ENCODE measurements at regions of chr1 and their contacts with region 1.

Region 1: DNA sequence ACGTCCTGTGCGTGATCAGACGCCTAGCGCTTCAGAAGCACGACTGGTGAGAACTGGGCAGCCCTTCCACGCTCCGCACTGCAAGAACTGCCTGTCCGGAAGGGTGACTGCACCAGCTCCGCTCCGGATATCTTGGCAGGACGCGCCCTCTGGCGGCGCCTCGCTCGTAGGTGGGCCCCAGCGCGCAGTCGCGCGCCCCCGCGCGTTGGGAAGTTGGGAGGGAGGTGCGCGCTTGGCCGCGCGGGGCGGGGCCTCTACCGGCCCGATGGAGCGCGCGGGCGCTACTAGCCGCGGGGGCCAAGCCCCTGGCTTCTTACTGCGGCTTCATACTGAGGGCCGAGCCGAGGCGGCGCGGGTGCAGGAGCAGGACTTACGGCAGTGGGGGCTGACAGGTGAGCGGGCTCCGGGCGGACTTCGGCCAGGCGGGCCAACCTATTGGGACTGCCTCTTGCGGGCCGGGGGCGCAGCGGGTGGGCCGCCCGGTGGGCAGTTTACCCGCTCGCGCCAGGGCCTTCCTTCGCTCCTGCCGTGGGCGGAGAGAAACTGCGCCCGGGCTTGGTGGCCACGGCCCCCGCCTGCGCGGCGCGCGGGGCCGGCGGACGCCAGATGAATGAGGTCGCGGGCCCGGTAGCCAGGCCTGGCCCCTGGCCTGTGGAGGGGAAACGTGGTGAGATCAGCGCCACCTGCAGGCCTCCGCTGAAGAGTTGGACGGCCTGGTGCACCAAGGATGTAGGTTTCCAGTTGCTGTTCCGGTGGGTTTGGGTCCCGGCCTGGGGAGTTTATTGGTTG is at the start of gene CHD1L:
- DNase-seq: peak; percentile 95
- H3K4me3 ChIP-seq: peak within 1 kb of the TSS; percentile 100
- H3K27ac ChIP-seq: peak within 1 kb of the TSS; percentile 95
- H3K4me1 ChIP-seq: no peaks in the 10 kb centered on the region
- H3K27me3 ChIP-seq: no peaks in the 10 kb centered on the region
- CTCF ChIP-seq: peak; percentile 74
- total RNA-seq, gene CHD1L: 34.7 to 40.7 TPM

Region 2: DNA sequence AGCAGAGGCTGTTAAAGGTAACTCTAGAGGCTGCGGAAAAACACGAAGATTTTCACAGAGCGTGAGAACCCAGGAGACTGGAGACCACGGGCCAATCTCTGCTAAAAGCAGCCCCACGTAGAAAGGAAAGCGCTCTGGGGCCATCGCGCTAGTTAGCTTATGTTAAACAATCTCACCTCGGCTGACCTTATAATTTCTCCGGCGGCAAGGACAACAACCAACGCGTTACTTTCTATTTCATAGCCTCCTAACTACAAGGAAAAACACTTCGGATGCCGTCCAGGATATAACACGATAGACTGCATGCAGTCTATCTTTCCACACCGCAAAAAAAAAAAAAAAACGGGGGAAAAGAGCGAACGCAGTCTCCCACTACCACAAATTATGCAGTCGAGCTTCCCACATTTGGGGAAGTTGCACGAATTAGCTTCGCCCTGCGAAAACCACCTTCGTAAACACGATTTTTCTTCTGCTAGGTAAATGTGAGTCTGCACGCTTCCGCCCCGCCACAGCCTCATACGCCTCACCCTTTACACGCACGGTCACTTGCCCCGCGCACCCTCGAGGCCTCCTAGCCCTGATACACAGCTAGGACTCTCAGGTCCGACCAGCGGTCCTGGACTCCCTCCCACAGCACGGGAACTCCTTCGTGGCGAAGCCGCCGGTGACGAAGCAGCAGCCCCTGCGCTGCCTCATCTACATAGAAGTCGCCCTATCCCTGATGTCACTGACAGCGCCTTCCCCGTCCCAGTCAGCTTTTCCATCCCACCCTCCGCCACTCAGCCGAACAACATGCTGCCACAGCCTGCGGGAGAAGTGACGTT is 158.1 kb before region 1 on chr1:
- intact Hi-C with region 1: loop called (anchors 10 kb)
- DNase-seq: peak; percentile 72
- H3K4me3 ChIP-seq: peak overlapping the region; percentile 41
- H3K27ac ChIP-seq: peak overlapping the region; percentile 40
- H3K4me1 ChIP-seq: peaks cover 9% of the 10 kb centered on the region
- H3K27me3 ChIP-seq: peaks cover 37% of the 10 kb centered on the region
- CTCF ChIP-seq: no peak

Region 3: DNA sequence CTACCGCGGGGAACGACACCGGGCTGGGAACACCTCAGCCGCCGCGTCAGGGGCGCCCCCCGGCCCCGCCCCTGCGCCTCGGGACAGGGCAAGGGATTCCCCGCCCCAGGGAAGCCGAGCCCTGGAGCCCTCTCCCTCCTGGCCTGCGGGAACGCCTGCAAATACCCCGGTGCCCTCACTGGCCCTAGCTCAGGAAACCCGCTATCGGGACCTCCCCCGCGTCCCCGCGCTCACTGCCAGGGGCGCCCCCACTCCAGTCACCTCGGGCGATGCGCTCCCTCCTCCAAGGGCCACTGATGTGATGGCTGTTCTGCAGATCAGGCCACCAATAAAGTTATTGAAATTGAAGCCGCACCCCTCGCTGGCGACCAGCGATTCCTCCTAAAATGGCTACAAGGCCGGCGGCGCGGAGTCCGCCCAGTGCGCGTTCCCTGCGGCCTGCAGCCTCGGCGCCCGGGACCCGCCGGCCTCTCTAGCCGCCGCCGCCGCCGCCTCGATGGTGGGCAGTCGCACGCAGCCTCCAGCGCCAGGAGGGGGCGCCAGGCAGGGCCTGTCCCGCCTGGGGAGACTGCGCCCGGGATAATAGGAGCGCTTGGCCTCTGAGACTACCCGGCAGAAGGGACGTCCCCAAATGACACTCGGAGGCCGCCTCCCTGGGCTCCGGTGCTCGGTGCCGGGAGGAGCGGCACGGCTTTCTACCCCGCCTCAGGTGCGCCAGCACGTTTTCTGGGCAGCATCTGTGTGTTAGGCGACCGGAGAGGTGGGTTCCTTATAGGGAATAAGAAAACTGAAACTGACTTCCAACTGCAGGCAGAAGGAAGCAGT is 70.3 kb before region 1 on chr1 and contains the start of gene PRKAB2:
- intact Hi-C with region 1: loop called (anchors 2 kb)
- DNase-seq: peak; percentile 95
- H3K4me3 ChIP-seq: peak within 1 kb of the TSS; percentile 92
- H3K27ac ChIP-seq: peak within 1 kb of the TSS; percentile 96
- H3K4me1 ChIP-seq: peaks cover 16% of the 10 kb centered on the region
- H3K27me3 ChIP-seq: no peaks in the 10 kb centered on the region
- CTCF ChIP-seq: peak; percentile 90
- total RNA-seq, gene PRKAB2: 11.3 to 22.5 TPM

Measured in colonic mucosa (tissue), 4 donors.